PC-9 (cell line): ENCODE measurements at regions of chr20 and their contacts with region 1.

Region 1: DNA sequence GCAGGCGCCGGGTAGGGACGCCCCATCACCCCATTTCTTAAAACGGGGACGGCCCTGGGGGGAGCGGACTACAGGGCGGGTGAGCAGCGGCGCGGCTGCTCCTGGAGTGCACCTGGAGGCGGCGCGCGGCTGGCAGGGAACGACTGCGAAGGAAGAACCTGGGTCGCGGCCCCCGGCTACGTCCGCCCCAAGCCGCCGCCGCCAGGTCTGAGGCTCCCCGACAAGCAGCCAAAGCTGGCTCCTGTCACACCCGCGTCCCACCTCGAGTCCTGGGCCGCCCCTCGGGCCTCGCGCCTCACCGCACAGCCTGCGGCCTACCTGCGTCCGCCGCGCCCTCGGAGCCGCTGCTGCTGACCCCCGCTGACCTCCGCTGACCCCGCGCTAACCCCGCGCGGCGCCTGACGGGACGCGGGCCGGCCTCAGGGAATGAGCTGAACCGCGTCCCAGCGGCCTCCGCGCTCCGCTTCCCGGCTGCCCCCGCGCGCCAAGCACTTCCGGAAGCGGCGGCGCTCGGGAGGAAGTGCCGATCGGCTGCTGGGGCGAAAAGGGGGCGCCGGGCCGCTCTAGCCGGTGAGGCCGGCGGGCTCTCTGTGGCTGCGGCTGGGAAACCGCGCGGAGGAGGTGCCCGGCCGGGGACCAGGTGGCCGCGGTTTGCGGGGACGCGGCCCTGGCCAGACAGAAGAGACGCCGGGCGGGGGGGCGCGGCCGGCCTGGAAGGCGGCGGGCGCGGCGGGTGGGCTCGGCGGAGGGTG is at the starts of genes ARFRP1 and ZGPAT:
- DNase-seq: peak; percentile 67 to 91
- H3K4me3 ChIP-seq: peak within 1 kb of the TSS; percentile 96
- H3K27ac ChIP-seq: peak within 1 kb of the TSS; percentile 37
- H3K4me1 ChIP-seq: peaks cover 18% of the 10 kb centered on the region
- H3K27me3 ChIP-seq: no peaks in the 10 kb centered on the region
- CTCF ChIP-seq: no peak
- total RNA-seq, gene ARFRP1: 59.1 and 71.1 TPM in 2 replicates
- total RNA-seq, gene ZGPAT: 27.2 and 31.4 TPM in 2 replicates

Region 2: DNA sequence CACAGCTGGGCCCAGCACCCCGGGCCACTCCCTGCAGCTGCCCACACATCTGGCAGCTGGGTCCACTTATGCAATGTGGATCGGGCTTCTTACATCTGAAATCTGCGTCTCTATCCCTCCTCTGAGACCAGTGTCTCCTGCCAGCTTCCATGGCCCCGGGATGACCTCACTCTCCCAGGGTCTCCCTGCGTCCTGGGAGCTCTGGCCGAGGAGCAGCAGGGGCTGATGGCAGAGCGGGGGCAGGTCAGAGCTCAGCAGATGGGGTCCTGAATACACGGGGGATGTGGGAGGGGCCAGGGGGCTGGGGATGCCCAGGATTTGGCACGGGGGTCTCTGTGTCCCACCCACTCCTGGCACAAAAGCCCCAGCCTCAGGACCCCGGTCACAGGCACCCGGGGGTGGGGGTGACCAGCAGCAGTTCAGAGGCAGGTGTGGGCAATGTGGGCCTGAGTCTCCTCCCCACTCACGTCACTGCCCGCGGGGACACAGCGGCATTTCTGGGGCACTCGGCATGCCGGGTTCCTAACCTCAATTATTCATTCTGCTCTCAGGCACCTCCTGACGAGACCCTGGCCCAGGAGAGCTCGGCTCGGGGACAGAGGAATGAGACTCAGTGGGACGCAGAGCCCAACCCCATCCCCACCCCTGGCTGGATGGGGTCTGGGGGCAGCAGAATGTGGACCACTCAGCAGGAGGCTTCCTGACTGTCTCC is 363.0 kb before region 1 on chr20:
- CTCF ChIA-PET with region 1: no interaction called
- POLR2A ChIA-PET with region 1: interaction called, 10 read pairs
- intact Hi-C with region 1: no loop called
- DNase-seq: no peak
- H3K4me3 ChIP-seq: no peak overlapping the region
- H3K27ac ChIP-seq: no peak overlapping the region
- H3K4me1 ChIP-seq: no peaks in the 10 kb centered on the region
- H3K27me3 ChIP-seq: peaks cover 97% of the 10 kb centered on the region
- CTCF ChIP-seq: no peak

Region 3: DNA sequence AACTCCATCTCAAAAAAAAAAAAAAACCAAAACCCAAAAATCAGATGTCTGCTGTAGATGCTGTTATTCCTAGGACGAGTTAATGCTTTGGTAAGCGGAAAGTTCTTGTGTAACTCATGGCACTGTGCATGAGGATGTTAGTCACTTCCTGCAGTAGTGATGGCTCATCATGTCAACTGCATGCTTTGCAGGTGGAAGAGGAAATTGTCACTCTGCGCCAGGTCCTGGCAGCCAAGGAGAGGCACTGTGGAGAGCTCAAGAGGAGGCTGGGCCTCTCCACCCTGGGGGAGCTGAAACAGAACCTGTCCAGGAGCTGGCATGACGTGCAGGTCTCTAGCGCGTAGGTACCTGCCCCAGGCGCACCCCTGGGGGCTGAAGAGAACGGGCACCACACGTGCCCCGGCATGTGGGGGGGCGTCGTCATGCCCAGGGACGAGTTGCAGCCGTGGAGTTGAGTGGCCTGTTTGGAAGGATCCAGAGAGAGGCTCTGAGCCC is 165.8 kb after region 1 on chr20:
- CTCF ChIA-PET with region 1: no interaction called
- POLR2A ChIA-PET with region 1: interaction called, 11 read pairs
- intact Hi-C with region 1: no loop called
- DNase-seq: peak in 1 of 2 experiments; percentile 52
- H3K4me3 ChIP-seq: no peak overlapping the region
- H3K27ac ChIP-seq: no peak overlapping the region
- H3K4me1 ChIP-seq: no peaks in the 10 kb centered on the region
- H3K27me3 ChIP-seq: no peaks in the 10 kb centered on the region
- CTCF ChIP-seq: no peak

Region 4: GRCh38 chr20:63955827-63956663 is 248.3 kb after region 1 on chr20 and contains the start of gene UCKL1:
- CTCF ChIA-PET with region 1: no interaction called
- POLR2A ChIA-PET with region 1: interaction called, 7 read pairs
- intact Hi-C with region 1: loop called (anchors 2 kb)
- DNase-seq: peak; percentile 74 to 94
- H3K4me3 ChIP-seq: peak within 1 kb of the TSS; percentile 74
- H3K27ac ChIP-seq: peak within 1 kb of the TSS; percentile 65
- H3K4me1 ChIP-seq: peaks cover 26% of the 10 kb centered on the region; the same call in 1 of the 2 replicates
- H3K27me3 ChIP-seq: no peaks in the 10 kb centered on the region
- CTCF ChIP-seq: 0 out of 2 replicates have a peak, but pooled peaks have one; percentile 13
- total RNA-seq, gene UCKL1: 51.7 and 55.1 TPM in 2 replicates